Activated T-helper 2 cell treated with anti-CD3 and anti-CD28 coated beads, Interferon-gamma antibody, Interleukin-2, Interleukin-4, amounts not matched to agents 10 μg/mL and 5 μg/mL and 100 μg/mL, durations not matched to agents 14 hours and 24 hours and 36 hours (primary cell): ENCODE measurements at regions of chr1 and their contacts with region 1.

Region 1: DNA sequence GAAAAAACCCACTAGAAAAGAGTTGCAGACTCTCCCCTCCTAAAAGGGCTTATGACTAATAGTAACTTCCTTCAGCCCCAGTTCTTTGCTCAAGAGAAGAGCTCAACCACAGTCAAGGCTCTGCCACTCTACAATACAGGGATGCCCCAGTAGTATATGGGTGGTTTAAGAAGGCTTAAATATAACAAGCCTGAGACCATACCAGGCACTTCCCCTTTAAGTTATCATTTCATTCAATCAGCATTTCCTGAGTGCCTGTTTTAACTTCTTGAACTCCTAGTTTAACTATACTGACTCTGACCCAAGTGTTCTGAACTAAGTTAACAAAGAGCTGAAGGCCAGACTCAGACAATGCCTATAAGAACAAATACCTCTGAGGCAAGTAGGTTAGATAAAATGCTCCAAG is 19.8 kb downstream of the PRPF38A start:
- DNase-seq: peak; percentile 18
- H3K4me3 Mint-ChIP-seq: peak overlapping the region; percentile 54
- H3K27ac Mint-ChIP-seq: peak overlapping the region; percentile 91
- H3K4me1 Mint-ChIP-seq: peaks cover 37% of the 10 kb centered on the region
- H3K27me3 Mint-ChIP-seq: no peaks in the 10 kb centered on the region

Region 2: DNA sequence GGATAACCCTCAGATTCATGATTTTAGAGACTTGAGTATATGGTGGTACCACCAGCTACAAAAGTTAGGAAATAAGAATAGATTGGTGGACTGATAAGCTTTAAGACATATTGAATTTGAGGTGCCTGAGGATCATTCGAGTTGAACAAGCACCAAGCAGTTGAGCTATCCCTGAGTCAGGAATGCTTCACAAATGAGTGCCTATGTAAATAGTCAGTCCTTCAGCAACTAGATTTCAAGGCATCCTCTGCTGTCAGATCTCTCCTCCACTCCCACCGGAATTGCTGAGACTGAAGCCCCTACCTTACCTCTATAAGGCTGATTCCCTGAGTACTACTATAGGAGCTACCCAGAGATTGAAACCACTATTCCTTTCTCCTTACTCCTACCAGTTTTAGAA is 361.0 kb before region 1 on chr1:
- intact Hi-C with region 1: no loop called
- DNase-seq: no peak
- H3K4me3 Mint-ChIP-seq: no peak overlapping the region
- H3K27ac Mint-ChIP-seq: no peak overlapping the region
- H3K4me1 Mint-ChIP-seq: peaks cover 17% of the 10 kb centered on the region
- H3K27me3 Mint-ChIP-seq: no peaks in the 10 kb centered on the region

Region 3: GRCh38 chr1:52190500-52191252 is 233.6 kb before region 1 on chr1:
- intact Hi-C with region 1: no loop called
- DNase-seq: no peak
- H3K4me3 Mint-ChIP-seq: no peak overlapping the region
- H3K27ac Mint-ChIP-seq: no peak overlapping the region
- H3K4me1 Mint-ChIP-seq: no peaks in the 10 kb centered on the region
- H3K27me3 Mint-ChIP-seq: no peaks in the 10 kb centered on the region

Region 4: DNA sequence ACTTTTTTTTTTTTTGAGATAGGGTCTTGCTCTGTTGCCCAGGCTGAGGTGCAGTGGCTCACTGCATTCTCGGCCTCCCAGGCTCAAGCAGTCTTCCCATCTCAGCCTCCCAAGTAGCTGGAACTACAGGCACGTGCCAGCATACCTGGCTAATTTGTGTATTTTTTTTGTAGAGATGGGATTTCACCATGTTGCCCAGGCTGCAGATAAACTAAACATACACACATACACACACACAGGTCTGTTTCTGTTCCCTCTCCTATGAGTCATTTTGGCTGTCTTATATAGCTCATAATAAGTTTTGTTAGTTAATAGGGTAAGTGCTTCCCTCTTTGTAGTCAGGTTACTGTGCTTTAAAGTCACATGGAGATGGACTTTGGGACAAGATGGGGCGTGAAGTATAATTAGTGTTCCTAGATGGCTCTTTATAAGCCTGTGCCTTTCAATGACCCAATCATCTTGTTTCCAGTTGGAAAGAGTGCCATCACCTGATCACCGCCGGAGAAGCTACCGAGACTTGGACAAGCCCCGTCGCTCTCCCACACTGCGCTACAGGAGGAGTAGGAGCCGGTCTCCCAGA is 10.7 kb before region 1 on chr1:
- intact Hi-C with region 1: no loop called
- DNase-seq: no peak
- H3K4me3 Mint-ChIP-seq: no peak overlapping the region
- H3K27ac Mint-ChIP-seq: no peak overlapping the region
- H3K4me1 Mint-ChIP-seq: peaks cover 6% of the 10 kb centered on the region
- H3K27me3 Mint-ChIP-seq: no peaks in the 10 kb centered on the region

Region 5: GRCh38 chr1:52520148-52520547 is 95.9 kb after region 1 on chr1:
- intact Hi-C with region 1: loop called (anchors 10 kb)
- DNase-seq: no peak
- H3K4me3 Mint-ChIP-seq: no peak overlapping the region
- H3K27ac Mint-ChIP-seq: peak overlapping the region; percentile 38
- H3K4me1 Mint-ChIP-seq: peaks cover 37% of the 10 kb centered on the region
- H3K27me3 Mint-ChIP-seq: no peaks in the 10 kb centered on the region

Region 6: DNA sequence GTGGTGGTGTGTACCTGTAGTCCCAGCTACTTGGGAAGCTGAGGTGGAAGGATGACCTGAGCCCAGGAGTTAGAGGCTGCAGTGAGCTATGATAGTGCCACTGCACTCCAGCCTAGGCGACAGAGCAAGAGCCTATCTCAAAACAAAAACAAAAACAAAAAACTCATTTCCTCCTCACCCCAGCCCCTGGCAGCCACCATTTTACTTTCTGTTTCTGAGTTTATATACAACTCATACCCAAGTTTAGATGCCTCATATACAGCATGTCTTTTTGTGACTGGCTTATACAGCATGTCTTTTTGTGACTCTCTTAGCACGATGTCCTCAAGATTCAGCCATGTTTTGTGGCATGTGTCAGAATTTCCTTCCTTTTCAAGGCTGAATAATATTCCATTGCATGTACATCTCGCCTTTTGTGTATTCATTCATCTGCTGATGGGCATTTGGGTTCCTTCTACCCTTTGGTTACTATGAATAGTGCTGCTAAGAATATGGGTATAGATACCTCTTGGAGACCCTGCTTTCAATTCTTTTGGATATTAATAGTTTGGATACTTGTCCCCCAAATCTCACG is 259.2 kb after region 1 on chr1:
- intact Hi-C with region 1: loop called (anchors 1 kb)
- DNase-seq: no peak
- H3K4me3 Mint-ChIP-seq: no peak overlapping the region
- H3K27ac Mint-ChIP-seq: no peak overlapping the region
- H3K4me1 Mint-ChIP-seq: peaks cover 9% of the 10 kb centered on the region
- H3K27me3 Mint-ChIP-seq: no peaks in the 10 kb centered on the region